ENCODE measurements at regions of chr13 and their contacts with region 1.

Region 1: DNA sequence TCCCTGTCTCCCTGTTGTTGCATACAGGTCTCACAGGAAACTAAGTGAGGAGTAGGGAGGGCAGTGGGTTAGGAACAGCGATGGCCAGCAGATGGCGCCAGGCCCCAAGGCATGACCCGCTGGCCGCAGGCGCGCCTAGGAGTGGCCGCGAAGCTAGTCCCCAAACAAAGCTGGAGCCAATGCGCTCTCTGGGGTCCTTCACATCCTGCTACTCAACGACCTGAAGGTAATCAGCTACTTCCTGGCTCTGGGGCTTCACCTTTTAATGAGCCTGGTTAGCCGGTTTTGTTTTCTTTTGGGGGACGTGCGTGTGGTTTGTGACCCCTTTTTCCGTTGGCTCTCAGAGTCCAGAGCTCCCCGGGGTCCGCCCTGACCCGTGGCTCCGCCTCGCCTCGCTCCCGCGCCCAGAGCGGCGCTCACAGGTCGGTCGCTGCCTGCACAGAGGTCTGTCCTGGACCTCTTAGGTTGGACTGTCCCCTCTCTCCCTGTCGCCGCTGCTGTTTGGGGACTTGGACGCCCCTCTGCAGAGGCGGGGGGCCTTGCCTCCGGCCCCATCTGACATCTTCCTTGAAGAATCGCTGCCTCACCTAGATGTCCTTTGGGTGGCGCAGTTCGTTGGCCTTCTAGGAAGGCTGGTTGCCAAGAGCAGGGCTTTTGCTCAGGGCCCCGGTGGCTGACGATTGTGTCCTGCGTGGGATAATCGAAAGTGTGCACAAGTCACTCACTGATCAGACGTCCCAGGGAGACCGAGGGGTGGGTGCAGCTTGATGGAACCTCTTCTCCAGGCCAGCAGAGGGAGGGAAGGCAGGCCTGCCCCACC is 62.1 kb upstream of the GTF3A start:
- DNase-seq: peak; percentile 59 to 78
- H3K4me3 ChIP-seq: peak overlapping the region; percentile 33; the same call in 1 of the 2 replicates
- H3K27ac ChIP-seq: no peak overlapping the region
- H3K4me1 ChIP-seq: no peaks in the 10 kb centered on the region; the same call in 1 of the 2 replicates
- H3K27me3 ChIP-seq: peaks cover 4% of the 10 kb centered on the region; the same call in 1 of the 2 replicates
- CTCF ChIP-seq: peak; percentile 90

Region 2: GRCh38 chr13:26946684-26947343 is 415.5 kb before region 1 on chr13:
- CTCF ChIA-PET with region 1: interaction called, 19 read pairs
- POLR2A ChIA-PET with region 1: no interaction called
- intact Hi-C with region 1: loop called (anchors 1 kb)
- DNase-seq: peak in 1 of 2 experiments; percentile 57
- H3K4me3 ChIP-seq: no peak overlapping the region
- H3K27ac ChIP-seq: no peak overlapping the region
- H3K4me1 ChIP-seq: 0 out of 2 replicates have a peak, but pooled peaks cover 6% of the 10 kb centered on the region
- H3K27me3 ChIP-seq: 0 out of 2 replicates have a peak, but pooled peaks cover under 1% of the 10 kb centered on the region
- CTCF ChIP-seq: peak; percentile 86

Region 3: GRCh38 chr13:27171827-27172494 is 190.3 kb before region 1 on chr13:
- CTCF ChIA-PET with region 1: interaction called, 5 read pairs
- POLR2A ChIA-PET with region 1: no interaction called
- intact Hi-C with region 1: loop called (anchors 10 kb)
- DNase-seq: peak; percentile 74 to 93
- H3K4me3 ChIP-seq: peak overlapping the region; percentile 90
- H3K27ac ChIP-seq: peak overlapping the region; percentile 61
- H3K4me1 ChIP-seq: peaks cover 28% of the 10 kb centered on the region
- H3K27me3 ChIP-seq: no peaks in the 10 kb centered on the region
- CTCF ChIP-seq: no peak

Region 4: GRCh38 chr13:27826379-27827353 is 464.4 kb after region 1 on chr13:
- CTCF ChIA-PET with region 1: interaction called, 12 read pairs
- POLR2A ChIA-PET with region 1: no interaction called
- intact Hi-C with region 1: no loop called
- DNase-seq: peak; percentile 53 to 66
- H3K4me3 ChIP-seq: peak overlapping the region; percentile 41; the same call in 1 of the 2 replicates
- H3K27ac ChIP-seq: no peak overlapping the region
- H3K4me1 ChIP-seq: 0 out of 2 replicates have a peak, but pooled peaks cover 3% of the 10 kb centered on the region
- H3K27me3 ChIP-seq: peaks cover 40% of the 10 kb centered on the region
- CTCF ChIP-seq: peak; percentile 97

Region 5: DNA sequence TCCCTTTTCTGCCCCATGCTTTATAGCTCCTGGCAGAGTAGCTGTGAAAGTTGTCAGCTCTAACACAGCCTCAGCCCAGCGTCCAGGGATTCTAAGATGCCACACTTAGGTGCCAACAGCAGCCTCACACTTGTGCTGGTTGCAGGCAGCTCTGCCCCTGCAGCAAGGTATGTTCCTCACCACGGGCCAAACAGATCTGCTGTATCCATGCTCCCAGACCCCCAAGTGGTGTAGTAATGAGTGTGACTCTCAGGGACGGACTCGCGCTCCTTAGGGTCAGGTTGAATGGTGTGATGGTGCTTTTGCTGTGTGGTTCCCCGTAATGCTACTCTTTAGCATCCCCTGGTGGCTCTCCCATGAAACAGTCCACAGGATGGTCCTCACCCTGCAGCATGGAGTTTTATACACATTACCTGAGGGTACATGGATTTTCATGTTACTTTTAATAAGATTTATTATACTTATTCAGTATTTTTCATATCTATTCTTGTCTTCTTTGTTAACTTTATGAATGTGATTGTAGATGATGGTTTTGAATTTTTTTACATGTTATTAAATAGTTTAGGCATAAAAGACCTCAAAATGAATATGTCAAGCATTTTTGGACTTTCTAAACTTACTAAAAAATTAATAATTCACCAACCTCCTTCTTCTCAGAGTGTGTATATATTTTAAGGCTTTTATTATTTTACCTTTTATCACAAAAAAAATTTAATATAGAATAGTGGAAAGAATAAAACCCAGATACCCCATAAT is 2000.8 kb after region 1 on chr13:
- CTCF ChIA-PET with region 1: no interaction called
- POLR2A ChIA-PET with region 1: no interaction called
- intact Hi-C with region 1: loop called (anchors 10 kb)
- DNase-seq: peak in 1 of 2 experiments; percentile 6
- H3K4me3 ChIP-seq: no peak overlapping the region
- H3K27ac ChIP-seq: no peak overlapping the region
- H3K4me1 ChIP-seq: no peaks in the 10 kb centered on the region
- H3K27me3 ChIP-seq: peaks cover 52% of the 10 kb centered on the region
- CTCF ChIP-seq: peak; percentile 84